Activated CD4-positive, alpha-beta memory T cell treated with anti-CD3 and anti-CD28 coated beads, Interleukin-2, amount 10 ng/mL, durations not matched to agents 7 days and 5 days (primary cell): ENCODE measurements at regions of chr2 and their contacts with region 1.

Region 1: DNA sequence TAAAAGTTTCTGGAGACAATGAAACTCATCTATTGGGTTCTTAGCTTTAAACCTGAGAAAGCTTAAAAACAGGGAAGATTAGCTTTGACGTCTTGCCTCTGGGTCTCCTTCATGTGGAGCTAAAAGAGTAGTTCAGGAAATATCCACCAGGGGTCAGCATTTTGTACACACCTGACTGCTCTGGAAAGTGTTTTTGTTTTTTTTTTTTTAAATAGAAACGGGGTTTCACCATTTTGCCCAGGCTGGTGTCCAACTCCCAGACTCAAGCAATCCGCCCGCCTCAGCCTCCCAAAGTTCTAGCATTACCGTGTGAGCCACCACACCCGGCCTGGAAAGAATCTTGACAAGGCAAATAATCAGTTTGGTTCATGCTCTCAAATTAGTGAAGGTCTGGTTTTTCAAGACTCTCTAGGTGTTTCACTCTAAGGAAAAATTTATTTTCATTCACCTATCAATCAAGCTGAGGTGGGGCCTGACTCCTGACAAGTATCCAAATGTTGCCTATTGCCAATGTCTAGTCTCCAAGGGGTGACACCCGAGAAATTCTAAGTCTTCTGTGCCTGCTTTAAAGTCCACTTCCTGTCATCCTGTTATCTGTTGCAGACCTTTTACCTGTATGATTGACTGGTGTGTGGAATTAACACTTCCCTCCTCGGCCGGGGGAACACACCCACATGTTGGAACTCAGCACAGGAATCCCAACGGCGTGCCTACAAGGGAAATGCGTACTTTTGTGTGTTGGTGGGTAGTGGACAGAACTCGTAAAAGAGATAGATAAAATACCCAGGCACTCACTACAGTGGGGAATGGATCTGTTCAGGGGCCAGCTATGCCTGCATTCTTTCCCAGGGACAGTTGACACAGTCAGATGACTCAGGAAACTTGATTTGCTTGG is 11.3 kb downstream of the IL1RN start:
- DNase-seq: peak; percentile 52
- H3K4me3 Mint-ChIP-seq: peak overlapping the region; percentile 25
- H3K27ac Mint-ChIP-seq: no peak overlapping the region
- H3K4me1 Mint-ChIP-seq: peaks cover 30% of the 10 kb centered on the region
- H3K27me3 Mint-ChIP-seq: no peaks in the 10 kb centered on the region

Region 2: DNA sequence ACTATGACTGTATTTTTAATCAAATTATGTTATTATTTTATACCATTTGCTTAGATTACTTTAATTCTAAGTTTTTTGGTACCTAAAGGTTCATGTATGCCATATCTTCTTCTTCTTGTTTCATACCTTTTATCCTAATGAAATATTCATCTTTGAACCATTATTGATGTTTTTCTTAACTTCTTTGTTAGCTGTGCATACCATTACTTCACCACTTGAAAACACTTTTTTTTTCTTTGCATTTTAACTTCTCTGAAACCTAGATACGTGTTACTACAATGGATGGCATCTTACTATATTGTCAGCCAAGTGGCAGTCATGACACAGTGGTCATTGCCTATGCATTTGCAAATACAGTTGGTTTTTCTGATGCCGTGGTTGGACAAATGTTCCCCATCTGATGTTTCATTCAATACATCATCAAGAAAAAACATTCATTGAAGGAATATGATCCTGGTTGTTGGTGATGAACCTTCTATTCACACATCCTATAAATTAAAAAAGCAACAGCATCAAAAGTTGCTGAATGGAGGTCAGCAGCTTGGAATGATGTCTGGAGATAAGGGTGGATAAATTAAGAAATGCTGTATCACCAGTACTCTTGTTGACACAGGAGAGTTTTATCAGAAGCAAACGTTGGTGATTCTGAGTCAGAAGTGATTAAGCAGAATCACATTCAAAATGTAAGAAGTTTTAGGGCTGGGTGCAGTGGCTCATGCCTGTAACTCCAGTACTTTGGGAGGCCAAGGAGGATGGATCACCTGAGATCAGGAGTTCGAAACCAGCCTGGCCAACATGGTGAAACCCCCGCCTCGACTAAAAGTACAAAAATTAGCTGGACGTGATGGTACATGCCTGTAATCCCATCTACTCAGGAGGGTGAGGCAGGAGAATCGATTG is 126.0 kb before region 1 on chr2:
- CTCF ChIA-PET with region 1: no interaction called
- POLR2A ChIA-PET with region 1: no interaction called
- DNase-seq: no peak
- H3K4me3 Mint-ChIP-seq: no peak overlapping the region
- H3K27ac Mint-ChIP-seq: no peak overlapping the region
- H3K4me1 Mint-ChIP-seq: no peaks in the 10 kb centered on the region
- H3K27me3 Mint-ChIP-seq: peaks cover 18% of the 10 kb centered on the region

Region 3: GRCh38 chr2:113148606-113149560 is 10.2 kb after region 1 on chr2:
- CTCF ChIA-PET with region 1: interaction called, 10 read pairs
- POLR2A ChIA-PET with region 1: no interaction called
- DNase-seq: no peak
- H3K4me3 Mint-ChIP-seq: no peak overlapping the region
- H3K27ac Mint-ChIP-seq: no peak overlapping the region
- H3K4me1 Mint-ChIP-seq: no peaks in the 10 kb centered on the region
- H3K27me3 Mint-ChIP-seq: peaks cover 32% of the 10 kb centered on the region

Region 4: GRCh38 chr2:113173542-113174395 is 35.1 kb after region 1 on chr2 and contains the start of gene PSD4:
- CTCF ChIA-PET with region 1: interaction called, 136 read pairs
- POLR2A ChIA-PET with region 1: interaction called, 45 read pairs
- DNase-seq: peak; percentile 95
- H3K4me3 Mint-ChIP-seq: peak within 1 kb of the TSS; percentile 80
- H3K27ac Mint-ChIP-seq: peak within 1 kb of the TSS; percentile 85
- H3K4me1 Mint-ChIP-seq: peaks cover 73% of the 10 kb centered on the region
- H3K27me3 Mint-ChIP-seq: no peaks in the 10 kb centered on the region
- total RNA-seq, gene PSD4: 261 to 272 TPM

Region 5: GRCh38 chr2:113198790-113199612 is 60.3 kb after region 1 on chr2:
- CTCF ChIA-PET with region 1: interaction called, 95 read pairs
- POLR2A ChIA-PET with region 1: interaction called, 34 read pairs
- DNase-seq: peak; percentile 82
- H3K4me3 Mint-ChIP-seq: no peak overlapping the region
- H3K27ac Mint-ChIP-seq: no peak overlapping the region
- H3K4me1 Mint-ChIP-seq: peaks cover 48% of the 10 kb centered on the region
- H3K27me3 Mint-ChIP-seq: no peaks in the 10 kb centered on the region

Region 6: DNA sequence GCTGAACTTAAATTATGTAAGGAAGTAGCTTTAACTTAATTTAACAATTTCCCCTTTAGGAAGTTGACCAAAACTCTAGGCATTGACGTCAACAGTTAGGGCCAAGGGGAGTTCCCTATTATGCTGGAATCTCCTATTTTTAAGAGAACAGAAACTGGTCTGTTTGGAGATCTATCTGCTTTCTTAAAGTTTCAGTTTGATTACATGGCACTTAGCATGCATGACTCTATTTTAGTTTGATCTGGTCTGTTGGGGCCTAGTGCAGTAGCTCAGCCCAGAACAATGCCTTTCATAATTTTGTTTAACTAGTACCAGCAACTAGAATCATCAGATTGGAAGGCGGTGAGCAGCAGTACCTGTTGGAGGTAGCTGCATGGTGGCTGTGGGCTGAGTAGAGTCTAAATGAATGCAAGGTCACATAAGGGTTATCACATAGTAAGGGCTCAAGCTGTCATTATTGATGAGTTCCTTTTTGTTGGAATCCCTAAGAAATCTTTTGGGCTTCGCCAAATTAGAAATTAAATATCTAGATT is 238.3 kb after region 1 on chr2:
- CTCF ChIA-PET with region 1: interaction called, 10 read pairs
- POLR2A ChIA-PET with region 1: no interaction called
- DNase-seq: no peak
- H3K4me3 Mint-ChIP-seq: no peak overlapping the region
- H3K27ac Mint-ChIP-seq: no peak overlapping the region
- H3K4me1 Mint-ChIP-seq: peaks cover 7% of the 10 kb centered on the region
- H3K27me3 Mint-ChIP-seq: peaks cover 20% of the 10 kb centered on the region